Activated T-helper 1 cell treated with anti-CD3 and anti-CD28 coated beads, Interleukin-12 subunit alpha, Interleukin-12 subunit beta, Interleukin-2, Interleukin-4 antibody, amounts not matched to agents 30 ng/mL and 10 ng/mL and 1 ng/mL, durations not matched to agents 14 hours and 24 hours and 36 hours (primary cell): ENCODE measurements at regions of chr14 and their contacts with region 1.

Region 1: GRCh38 chr14:73568381-73568781 is 632 bp upstream of the ACOT2 start:
- DNase-seq: no peak
- H3K4me3 Mint-ChIP-seq: peak overlapping the region; percentile 92
- H3K27ac Mint-ChIP-seq: peak overlapping the region; percentile 97
- H3K4me1 Mint-ChIP-seq: peaks cover 39% of the 10 kb centered on the region
- H3K27me3 Mint-ChIP-seq: no peaks in the 10 kb centered on the region

Region 2: GRCh38 chr14:73290279-73290678 is 278.1 kb before region 1 on chr14:
- intact Hi-C with region 1: loop called (anchors 2 kb)
- DNase-seq: no peak
- H3K4me3 Mint-ChIP-seq: peak overlapping the region; percentile 25
- H3K27ac Mint-ChIP-seq: peak overlapping the region; percentile 63
- H3K4me1 Mint-ChIP-seq: peaks cover 49% of the 10 kb centered on the region
- H3K27me3 Mint-ChIP-seq: no peaks in the 10 kb centered on the region

Region 3: DNA sequence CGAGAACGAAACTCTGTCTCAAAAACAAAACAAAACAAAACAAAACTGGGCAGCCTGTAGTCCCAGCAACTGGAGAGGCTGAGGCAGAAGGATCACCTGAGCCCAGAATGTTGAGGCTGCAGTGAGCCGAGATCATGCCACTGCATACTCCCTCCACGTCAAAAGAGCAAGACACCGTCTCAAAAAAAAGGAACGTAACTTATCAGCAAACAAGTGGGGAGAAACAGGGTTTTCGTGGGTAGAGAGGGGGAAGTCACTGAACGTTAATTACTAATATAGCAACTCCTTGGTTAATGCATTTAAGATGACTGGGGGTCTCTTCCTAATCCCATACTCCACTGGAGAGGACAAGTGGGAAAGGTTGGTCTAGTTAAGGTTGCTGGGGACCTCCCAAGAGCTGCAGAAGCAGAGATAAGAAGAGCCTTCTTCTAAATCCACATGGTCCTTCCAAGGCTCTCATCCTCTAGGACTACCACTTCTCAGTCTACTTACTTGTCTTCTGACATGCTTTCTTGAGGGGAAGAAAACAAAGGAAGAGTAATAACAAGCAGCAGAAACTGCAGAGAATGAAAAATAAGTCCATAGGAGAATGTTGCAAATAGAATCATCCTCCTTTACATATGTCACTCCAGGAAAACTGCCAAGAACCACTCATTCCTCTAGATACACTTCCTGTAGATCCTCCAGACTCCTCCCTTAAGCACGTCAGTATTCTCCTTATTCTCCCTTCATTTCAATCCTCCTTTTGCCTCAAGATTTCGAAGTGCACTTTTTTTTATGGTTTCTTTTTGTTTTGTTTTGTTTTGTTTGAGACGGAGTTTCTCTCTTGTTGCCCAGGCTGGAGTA is 115.8 kb before region 1 on chr14:
- intact Hi-C with region 1: no loop called
- DNase-seq: no peak
- H3K4me3 Mint-ChIP-seq: no peak overlapping the region
- H3K27ac Mint-ChIP-seq: no peak overlapping the region
- H3K4me1 Mint-ChIP-seq: peaks cover 30% of the 10 kb centered on the region
- H3K27me3 Mint-ChIP-seq: no peaks in the 10 kb centered on the region

Region 4: DNA sequence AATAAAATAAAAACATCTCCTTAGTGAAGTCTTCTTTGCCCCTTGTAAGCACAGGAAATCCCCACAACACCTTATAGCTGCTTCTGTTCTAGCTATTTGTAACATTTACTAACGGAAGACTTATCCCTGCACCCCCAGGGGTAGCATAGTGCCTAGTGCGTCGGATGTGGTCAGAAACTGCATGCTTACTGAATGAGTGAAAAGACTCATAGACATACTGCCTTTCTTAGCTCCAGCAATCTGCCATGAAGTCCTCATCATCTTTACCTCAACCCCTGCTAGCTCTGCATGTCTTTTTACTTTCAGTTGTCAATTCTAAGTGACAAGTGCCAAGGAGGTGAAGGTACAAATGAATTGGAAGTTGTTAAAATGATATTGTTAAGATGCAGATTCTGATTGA is 64.7 kb before region 1 on chr14:
- intact Hi-C with region 1: loop called (anchors 1 kb)
- DNase-seq: no peak
- H3K4me3 Mint-ChIP-seq: no peak overlapping the region
- H3K27ac Mint-ChIP-seq: no peak overlapping the region
- H3K4me1 Mint-ChIP-seq: no peaks in the 10 kb centered on the region
- H3K27me3 Mint-ChIP-seq: no peaks in the 10 kb centered on the region

Region 5: GRCh38 chr14:73633116-73634010 is 65.0 kb after region 1 on chr14:
- intact Hi-C with region 1: loop called (anchors 1 kb)
- DNase-seq: peak; percentile 40
- H3K4me3 Mint-ChIP-seq: peak overlapping the region; percentile 53
- H3K27ac Mint-ChIP-seq: no peak overlapping the region
- H3K4me1 Mint-ChIP-seq: peaks cover 6% of the 10 kb centered on the region
- H3K27me3 Mint-ChIP-seq: peaks cover 41% of the 10 kb centered on the region

Region 6: GRCh38 chr14:73696466-73697400 is 128.4 kb after region 1 on chr14:
- intact Hi-C with region 1: loop called (anchors 2 kb)
- DNase-seq: no peak
- H3K4me3 Mint-ChIP-seq: peak overlapping the region; percentile 64
- H3K27ac Mint-ChIP-seq: peak overlapping the region; percentile 78
- H3K4me1 Mint-ChIP-seq: peaks cover 41% of the 10 kb centered on the region
- H3K27me3 Mint-ChIP-seq: no peaks in the 10 kb centered on the region